Heart left ventricle (tissue), 16 donors: ENCODE measurements at regions of chr15 and their contacts with region 1.

Region 1: DNA sequence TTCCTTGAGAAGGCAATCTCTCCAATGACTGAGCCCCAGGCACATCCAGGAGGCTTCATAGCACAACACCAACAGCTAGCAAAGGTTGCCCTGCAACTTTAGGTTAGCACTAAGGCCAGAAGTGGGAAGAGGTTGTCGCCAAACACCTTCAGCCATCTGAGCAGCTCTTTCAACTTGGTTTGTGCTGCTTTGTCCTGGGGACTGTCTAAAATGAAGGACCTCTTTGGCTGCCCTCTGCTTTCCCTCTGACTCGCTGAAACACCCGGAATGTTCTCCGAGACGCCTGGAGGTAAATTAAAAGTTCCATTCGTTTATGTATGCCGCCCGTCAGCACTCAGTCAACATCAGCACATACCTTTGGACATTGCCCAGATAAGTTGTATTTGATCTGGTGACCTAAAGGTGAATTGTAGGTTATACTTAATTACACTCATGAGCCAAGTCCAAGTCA is 121.2 kb upstream of the NR2F2 start:
- DNase-seq: no peak
- ATAC-seq: no peak
- H3K4me3 ChIP-seq: no peak overlapping the region
- H3K27ac ChIP-seq: no peak overlapping the region
- H3K4me1 ChIP-seq: no peaks in the 10 kb centered on the region
- H3K27me3 ChIP-seq: no peaks in the 10 kb centered on the region
- CTCF ChIP-seq: no peak
- POLR2A ChIP-seq: no peak

Region 2: DNA sequence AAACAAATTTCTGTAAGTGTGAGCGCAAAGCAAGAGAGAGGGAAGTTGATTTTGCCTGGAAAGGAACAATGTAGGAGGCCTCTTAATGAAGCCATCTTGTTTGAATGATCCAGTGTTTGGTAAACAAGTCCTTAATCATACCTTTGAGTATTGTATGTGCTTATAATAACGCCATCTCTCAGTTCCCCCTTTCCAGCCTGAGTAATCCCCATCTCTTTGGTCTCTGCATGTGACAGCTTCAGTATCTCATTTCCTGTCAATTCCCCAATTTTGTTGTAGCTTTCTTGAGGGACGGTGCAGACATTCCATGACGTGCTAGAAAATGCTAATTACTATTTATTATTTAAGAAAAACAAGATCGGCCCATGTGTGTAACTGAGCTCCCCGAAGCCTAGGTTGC is 228.1 kb before region 1 on chr15:
- intact Hi-C with region 1: no loop called
- DNase-seq: no peak
- ATAC-seq: no peak
- H3K4me3 ChIP-seq: no peak overlapping the region
- H3K27ac ChIP-seq: no peak overlapping the region
- H3K4me1 ChIP-seq: no peaks in the 10 kb centered on the region
- H3K27me3 ChIP-seq: no peaks in the 10 kb centered on the region
- CTCF ChIP-seq: no peak
- POLR2A ChIP-seq: no peak

Region 3: GRCh38 chr15:96261575-96262034 is 52.3 kb after region 1 on chr15:
- intact Hi-C with region 1: loop called in 1 of 10 experiments (anchors 10 kb)
- DNase-seq: no peak
- ATAC-seq: no peak
- H3K4me3 ChIP-seq: no peak overlapping the region
- H3K27ac ChIP-seq: peak overlapping the region in 1 of 12 donors; percentile 55
- H3K4me1 ChIP-seq: peaks cover 0 to 3% (median 0%) of the 10 kb centered on the region in 12 donors
- H3K27me3 ChIP-seq: no peaks in the 10 kb centered on the region
- CTCF ChIP-seq: no peak
- POLR2A ChIP-seq: no peak